ENCODE measurements at regions of chr2 and their contacts with region 1.

Region 1: GRCh38 chr2:42191285-42192009 is 22.3 kb downstream of the EML4 start:
- DNase-seq: no peak
- ATAC-seq: no peak
- H3K4me3 Mint-ChIP-seq: no peak overlapping the region
- H3K27ac Mint-ChIP-seq: peak overlapping the region; percentile 24
- H3K4me1 Mint-ChIP-seq: peaks cover 73% of the 10 kb centered on the region
- H3K27me3 Mint-ChIP-seq: no peaks in the 10 kb centered on the region

Region 2: GRCh38 chr2:42176992-42177738 is 14.3 kb before region 1 on chr2:
- CTCF ChIA-PET with region 1: interaction called, 6 read pairs
- POLR2A ChIA-PET with region 1: interaction called, 3 read pairs
- intact Hi-C with region 1: loop called in 1 of 2 experiments (anchors 1 kb)
- DNase-seq: no peak
- ATAC-seq: no peak
- H3K4me3 Mint-ChIP-seq: no peak overlapping the region
- H3K27ac Mint-ChIP-seq: peak overlapping the region; percentile 34
- H3K4me1 Mint-ChIP-seq: peaks cover 72% of the 10 kb centered on the region
- H3K27me3 Mint-ChIP-seq: no peaks in the 10 kb centered on the region

Region 3: DNA sequence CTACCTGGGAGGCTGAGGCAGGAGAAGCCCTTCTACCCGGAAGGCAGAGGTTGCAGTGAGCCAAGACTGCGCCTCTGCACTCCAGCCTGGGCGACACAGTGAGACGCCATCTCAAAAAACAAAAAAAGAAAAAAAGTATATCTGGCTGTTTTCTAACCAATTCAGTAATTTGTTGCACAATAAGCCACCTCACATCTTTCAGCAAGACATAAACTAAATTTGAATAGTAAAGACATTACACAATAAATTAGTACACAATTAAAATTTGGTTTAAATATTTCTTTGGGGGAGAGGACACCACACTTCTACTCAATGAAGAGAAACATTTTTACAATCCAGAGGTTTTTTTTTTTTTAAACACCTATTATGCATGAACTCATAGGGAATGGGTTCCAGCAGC is 340.9 kb after region 1 on chr2:
- CTCF ChIA-PET with region 1: no interaction called
- POLR2A ChIA-PET with region 1: no interaction called
- intact Hi-C with region 1: no loop called
- DNase-seq: no peak
- ATAC-seq: no peak
- H3K4me3 Mint-ChIP-seq: no peak overlapping the region
- H3K27ac Mint-ChIP-seq: no peak overlapping the region
- H3K4me1 Mint-ChIP-seq: no peaks in the 10 kb centered on the region
- H3K27me3 Mint-ChIP-seq: no peaks in the 10 kb centered on the region

Measured in activated CD4-positive, alpha-beta T cell treated with anti-CD3 and anti-CD28 coated beads for 36 hours (primary cell).